Right lobe of liver (tissue), 6 donors: ENCODE measurements at regions of chr10 and their contacts with region 1.

Region 1: GRCh38 chr10:114103284-114103683 is 59.6 kb downstream of the ADRB1 start:
- DNase-seq: no peak
- ATAC-seq: peak; percentile 79 to 85 (median 84)
- H3K4me3 ChIP-seq: no peak overlapping the region
- H3K27ac ChIP-seq: no peak overlapping the region
- H3K4me1 ChIP-seq: peaks cover 0 to 8% (median 0%) of the 10 kb centered on the region in 4 donors
- H3K27me3 ChIP-seq: no peaks in the 10 kb centered on the region
- CTCF ChIP-seq: peak; percentile 57 to 72 (median 58)
- POLR2A ChIP-seq: no peak

Region 2: DNA sequence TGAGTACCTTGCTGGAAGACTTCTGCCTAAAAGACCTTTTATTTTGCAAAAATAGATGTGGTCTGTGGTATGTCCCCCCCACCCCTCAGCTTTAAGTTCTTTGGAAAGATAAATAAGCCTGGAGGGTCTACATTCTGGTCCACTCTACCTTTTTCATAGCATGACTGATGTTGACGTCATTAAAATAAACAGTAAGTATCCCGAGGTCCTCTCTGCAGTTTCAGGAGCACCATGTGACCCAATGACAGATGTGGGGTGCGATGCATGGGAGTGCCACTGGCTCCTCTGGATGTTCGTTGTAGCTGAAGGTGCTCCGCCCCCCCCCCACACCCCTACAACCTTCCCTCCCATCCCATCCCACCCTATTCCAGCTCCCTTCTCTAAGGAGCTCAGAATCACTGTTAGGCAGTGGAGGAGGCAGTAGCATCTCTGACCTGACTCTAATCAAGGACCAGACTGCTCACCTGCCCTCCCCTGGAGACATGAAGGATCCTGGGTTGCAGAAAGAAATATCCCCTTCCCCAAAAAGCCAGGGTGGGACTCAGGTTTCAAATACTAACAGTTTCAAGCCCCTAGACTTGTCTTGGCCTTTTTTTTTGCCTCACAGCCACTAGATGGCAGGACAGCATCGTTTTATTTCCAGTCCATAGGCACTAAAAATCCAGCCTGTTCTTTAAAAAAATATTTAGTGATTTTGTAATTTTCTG is 398.5 kb before region 1 on chr10:
- intact Hi-C with region 1: loop called in 1 of 2 experiments (anchors 10 kb)
- DNase-seq: no peak
- ATAC-seq: peak in 3 of 4 donors; percentile 53 to 66 (median 54)
- H3K4me3 ChIP-seq: no peak overlapping the region
- H3K27ac ChIP-seq: no peak overlapping the region
- H3K4me1 ChIP-seq: no peaks in the 10 kb centered on the region
- H3K27me3 ChIP-seq: no peaks in the 10 kb centered on the region
- CTCF ChIP-seq: peak; percentile 39 to 65 (median 59)
- POLR2A ChIP-seq: no peak

Region 3: DNA sequence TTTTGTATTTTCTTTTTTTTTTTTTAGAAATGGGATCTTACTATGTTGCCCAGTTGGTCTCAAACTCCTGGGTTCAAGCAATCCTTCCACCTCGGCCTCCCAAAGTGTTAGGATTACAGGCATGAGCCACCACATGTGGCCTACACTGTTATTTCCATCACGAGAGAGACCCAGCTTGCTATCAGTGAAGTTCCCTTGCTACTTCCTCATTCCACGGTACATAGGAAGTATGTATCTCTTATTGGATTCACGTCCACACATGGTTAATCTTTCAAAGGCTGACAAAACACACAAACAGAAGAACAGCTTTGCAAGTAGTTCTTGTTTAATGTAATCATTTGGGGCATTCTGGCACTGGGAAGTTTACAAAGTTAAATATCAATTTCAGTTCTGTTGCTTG is 300.3 kb before region 1 on chr10:
- intact Hi-C with region 1: loop called (anchors 5 kb)
- DNase-seq: no peak
- ATAC-seq: no peak
- H3K4me3 ChIP-seq: no peak overlapping the region
- H3K27ac ChIP-seq: no peak overlapping the region
- H3K4me1 ChIP-seq: no peaks in the 10 kb centered on the region
- H3K27me3 ChIP-seq: no peaks in the 10 kb centered on the region
- CTCF ChIP-seq: no peak
- POLR2A ChIP-seq: no peak